ENCODE measurements at regions of chr4 and their contacts with region 1.

Region 1: GRCh38 chr4:122542411-122543236 is 78.2 kb downstream of the IL21 start:
- DNase-seq: peak; percentile 69
- H3K4me3 Mint-ChIP-seq: peak overlapping the region; percentile 78
- H3K27ac Mint-ChIP-seq: peak overlapping the region; percentile 94
- H3K4me1 Mint-ChIP-seq: peaks cover 80% of the 10 kb centered on the region
- H3K27me3 Mint-ChIP-seq: no peaks in the 10 kb centered on the region

Region 2: GRCh38 chr4:122508083-122508482 is 34.5 kb before region 1 on chr4:
- intact Hi-C with region 1: loop called (anchors 1 kb)
- DNase-seq: peak; percentile 70
- H3K4me3 Mint-ChIP-seq: peak overlapping the region; percentile 65
- H3K27ac Mint-ChIP-seq: peak overlapping the region; percentile 82
- H3K4me1 Mint-ChIP-seq: peaks cover 55% of the 10 kb centered on the region
- H3K27me3 Mint-ChIP-seq: no peaks in the 10 kb centered on the region

Region 3: DNA sequence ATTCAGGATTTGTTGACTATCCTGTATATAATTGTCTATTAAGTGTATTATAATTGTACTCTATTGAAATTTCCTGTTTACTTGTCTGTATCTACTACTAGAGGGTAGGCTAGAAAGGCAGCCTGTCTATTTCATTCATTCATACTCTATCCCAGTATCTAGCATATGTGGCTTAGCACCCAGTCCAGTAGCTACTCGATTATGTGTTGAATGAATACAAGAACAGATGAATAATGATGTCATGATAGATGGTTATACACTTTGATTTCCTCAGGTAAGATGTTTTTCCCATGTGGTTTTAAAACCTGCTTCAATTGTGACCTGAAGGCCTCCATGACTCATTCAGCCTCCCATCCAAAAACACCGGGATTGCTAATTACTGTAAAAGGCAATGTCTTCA is 10.3 kb after region 1 on chr4:
- intact Hi-C with region 1: loop called (anchors 1 kb)
- DNase-seq: no peak
- H3K4me3 Mint-ChIP-seq: peak overlapping the region; percentile 14
- H3K27ac Mint-ChIP-seq: peak overlapping the region; percentile 78
- H3K4me1 Mint-ChIP-seq: peaks cover 59% of the 10 kb centered on the region
- H3K27me3 Mint-ChIP-seq: no peaks in the 10 kb centered on the region

Region 4: GRCh38 chr4:122584519-122584918 is 41.9 kb after region 1 on chr4:
- intact Hi-C with region 1: loop called (anchors 1 kb)
- DNase-seq: peak; percentile 81
- H3K4me3 Mint-ChIP-seq: peak overlapping the region; percentile 64
- H3K27ac Mint-ChIP-seq: peak overlapping the region; percentile 95
- H3K4me1 Mint-ChIP-seq: peaks cover 53% of the 10 kb centered on the region
- H3K27me3 Mint-ChIP-seq: no peaks in the 10 kb centered on the region

Region 5: DNA sequence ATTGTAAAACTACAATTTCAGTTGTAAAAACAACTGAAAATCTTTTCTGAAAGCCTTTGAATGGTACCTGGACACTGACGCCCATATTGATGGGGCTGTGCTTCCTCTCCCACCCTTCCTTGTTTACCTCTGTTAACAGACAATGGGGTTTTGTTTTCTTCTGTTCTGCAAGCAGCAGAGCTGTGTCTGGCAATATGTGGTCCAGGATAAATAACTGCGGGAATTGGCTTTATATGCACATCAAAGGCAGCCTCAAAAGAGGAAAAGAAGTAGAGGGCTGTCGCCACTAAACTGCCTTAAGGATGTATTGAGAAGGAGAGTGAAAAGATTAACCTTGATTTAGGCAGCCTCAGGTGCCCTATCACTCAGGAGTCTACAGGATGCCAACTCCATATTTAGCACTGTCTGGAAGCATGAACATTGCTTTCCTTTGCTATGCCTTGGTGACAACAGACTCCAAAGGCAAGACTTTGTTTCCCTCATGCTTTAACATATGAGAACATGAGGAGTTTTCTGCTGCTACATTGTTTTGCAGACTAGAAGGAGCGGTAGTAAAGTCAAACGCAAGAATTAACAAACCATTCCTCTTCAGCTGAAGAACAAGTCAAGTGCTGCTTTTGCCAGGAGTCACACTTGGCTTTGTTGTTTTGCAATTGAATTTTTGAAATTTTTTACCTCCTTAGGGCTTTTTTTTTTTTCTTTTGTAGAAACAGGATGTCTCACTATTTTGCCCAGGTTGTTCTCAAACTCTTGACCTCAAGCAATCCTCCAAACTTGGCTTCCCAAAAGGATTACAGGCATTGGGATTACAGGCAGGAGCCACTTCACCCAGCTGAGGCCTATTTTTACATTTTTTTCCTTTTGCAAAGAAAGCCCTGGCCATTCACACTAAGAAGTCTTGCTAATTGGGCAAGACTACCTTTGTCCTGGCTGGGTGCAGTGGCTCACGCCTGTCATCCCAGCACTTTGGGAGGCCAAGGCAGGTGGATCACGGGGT is 75.3 kb after region 1 on chr4:
- intact Hi-C with region 1: loop called (anchors 1 kb)
- DNase-seq: peak; percentile 58
- H3K4me3 Mint-ChIP-seq: peak overlapping the region; percentile 89
- H3K27ac Mint-ChIP-seq: peak overlapping the region; percentile 91
- H3K4me1 Mint-ChIP-seq: peaks cover 50% of the 10 kb centered on the region
- H3K27me3 Mint-ChIP-seq: no peaks in the 10 kb centered on the region

Region 6: DNA sequence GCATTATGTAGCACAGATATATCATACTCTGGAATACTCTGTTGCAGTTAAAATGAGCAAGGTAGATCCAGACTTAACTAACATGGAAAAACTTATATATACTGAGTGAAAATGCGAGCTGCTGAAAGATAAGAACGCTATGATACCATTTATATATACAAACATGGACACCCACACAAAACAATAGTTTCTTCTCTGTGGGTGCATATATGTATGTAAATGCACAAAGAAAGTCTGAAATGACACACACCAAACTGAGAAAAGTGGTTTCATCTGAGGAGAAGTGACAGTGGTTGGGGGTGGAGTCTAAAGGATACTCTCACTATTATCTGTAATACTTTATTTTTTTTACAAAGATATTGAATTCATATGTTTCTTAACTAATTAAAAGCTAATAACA is 271.8 kb after region 1 on chr4:
- intact Hi-C with region 1: loop called (anchors 5 kb)
- DNase-seq: no peak
- H3K4me3 Mint-ChIP-seq: no peak overlapping the region
- H3K27ac Mint-ChIP-seq: peak overlapping the region; percentile 70
- H3K4me1 Mint-ChIP-seq: peaks cover 10% of the 10 kb centered on the region
- H3K27me3 Mint-ChIP-seq: peaks cover 9% of the 10 kb centered on the region